Endothelial cell of umbilical vein (primary cell): ENCODE measurements at regions of chr20 and their contacts with region 1.

Region 1: DNA sequence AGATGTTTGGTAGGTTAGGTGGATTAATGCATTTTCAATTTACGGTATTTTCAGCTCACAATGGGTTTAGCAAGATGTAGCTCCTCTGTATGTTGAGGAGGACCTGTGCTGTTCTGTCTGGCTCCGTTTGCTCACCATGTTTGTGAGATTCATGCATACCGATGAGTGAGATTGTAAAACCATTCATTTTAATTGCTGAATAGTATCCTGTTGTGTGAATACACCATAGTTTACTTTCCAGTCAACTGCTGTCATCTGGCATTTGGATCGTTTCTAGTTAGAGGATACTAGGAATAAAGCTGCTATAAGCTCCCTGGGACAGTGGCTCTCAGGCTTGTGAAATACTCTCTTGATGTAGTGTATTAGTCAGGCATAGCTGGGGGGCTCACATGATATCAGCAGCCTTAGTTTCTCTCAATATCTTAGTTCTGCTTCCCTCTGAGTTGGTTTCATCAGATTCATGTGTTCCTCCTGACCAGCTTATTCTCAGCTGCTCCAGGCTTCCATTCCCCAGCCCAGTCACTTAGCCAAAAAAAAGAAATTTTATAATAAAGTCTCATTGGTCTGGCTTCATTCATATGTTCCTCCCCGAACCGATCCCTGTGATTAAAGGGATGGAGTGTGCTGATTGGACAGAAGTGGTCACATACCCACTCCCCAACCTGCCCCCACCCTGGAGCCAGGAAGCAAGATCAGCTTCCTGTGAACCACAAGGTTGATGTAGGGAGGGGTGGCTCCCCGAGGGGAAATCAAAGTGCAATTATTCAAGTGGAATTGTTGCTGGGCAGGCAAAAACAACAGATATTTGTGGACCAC is 10.9 kb upstream of the B4GALT5 start:
- DNase-seq: peak; percentile 90
- H3K4me3 ChIP-seq: no peak overlapping the region
- H3K27ac ChIP-seq: peak overlapping the region; percentile 47
- H3K4me1 ChIP-seq: peaks cover 10% of the 10 kb centered on the region
- H3K27me3 ChIP-seq: no peaks in the 10 kb centered on the region
- CTCF ChIP-seq: no peak
- POLR2A ChIP-seq: no peak

Region 2: GRCh38 chr20:49768204-49769047 is 43.8 kb after region 1 on chr20:
- CTCF ChIA-PET with region 1: interaction called, 4 read pairs
- POLR2A ChIA-PET with region 1: no interaction called
- dilution Hi-C with region 1: no loop called
- intact Hi-C with region 1: loop called (anchors 2 kb)
- DNase-seq: peak; percentile 92
- H3K4me3 ChIP-seq: no peak overlapping the region
- H3K27ac ChIP-seq: peak overlapping the region; percentile 39
- H3K4me1 ChIP-seq: peaks cover 23% of the 10 kb centered on the region
- H3K27me3 ChIP-seq: no peaks in the 10 kb centered on the region
- CTCF ChIP-seq: no peak
- POLR2A ChIP-seq: no peak